HEK293 (cell line): ENCODE measurements at regions of chr5 and their contacts with region 1.

Region 1: DNA sequence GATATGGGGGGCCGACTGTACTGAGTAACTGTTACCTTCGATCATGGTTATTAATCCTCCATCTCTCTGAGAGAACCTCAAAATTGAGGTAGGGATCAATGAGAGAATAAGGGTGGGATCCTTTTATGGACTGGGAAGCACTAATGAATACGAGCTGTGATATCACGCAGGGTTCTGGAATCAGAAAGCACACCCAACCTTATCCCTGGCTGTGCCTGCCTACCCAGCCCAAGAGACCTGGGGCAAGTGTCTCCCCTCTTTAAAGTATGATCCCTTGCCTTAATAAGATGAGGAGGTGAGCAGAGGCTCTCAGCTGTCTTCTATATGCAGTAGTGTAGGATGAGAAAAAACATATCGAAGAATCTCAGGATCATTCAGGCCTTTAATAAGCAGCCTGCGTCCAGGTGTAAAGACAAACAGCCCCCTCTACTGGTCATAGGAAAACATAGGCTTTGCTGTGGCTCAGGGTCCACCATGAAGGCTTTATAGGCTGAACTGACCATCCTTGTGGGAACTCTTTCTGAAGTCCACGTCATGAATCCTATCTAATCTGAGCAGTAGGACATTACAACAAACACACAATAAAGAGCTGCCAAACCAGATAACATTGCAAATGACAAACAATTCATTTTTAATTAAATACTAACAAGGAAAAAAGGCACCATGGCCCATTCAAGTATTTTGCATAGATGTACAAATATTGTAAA is 16.8 kb downstream of the NIPAL4 start:
- H3K4me3 ChIP-seq: no peak overlapping the region
- H3K27ac ChIP-seq: no peak overlapping the region
- H3K4me1 ChIP-seq: no peaks in the 10 kb centered on the region
- CTCF ChIP-seq: peak; percentile 70; the same call in 1 of the 2 replicates

Region 2: GRCh38 chr5:157328277-157328912 is 148.5 kb before region 1 on chr5:
- CTCF ChIA-PET with region 1: interaction called, 16 read pairs
- POLR2A ChIA-PET with region 1: no interaction called
- H3K4me3 ChIP-seq: no peak overlapping the region
- H3K27ac ChIP-seq: no peak overlapping the region
- H3K4me1 ChIP-seq: no peaks in the 10 kb centered on the region
- CTCF ChIP-seq: peak; percentile 79

Region 3: DNA sequence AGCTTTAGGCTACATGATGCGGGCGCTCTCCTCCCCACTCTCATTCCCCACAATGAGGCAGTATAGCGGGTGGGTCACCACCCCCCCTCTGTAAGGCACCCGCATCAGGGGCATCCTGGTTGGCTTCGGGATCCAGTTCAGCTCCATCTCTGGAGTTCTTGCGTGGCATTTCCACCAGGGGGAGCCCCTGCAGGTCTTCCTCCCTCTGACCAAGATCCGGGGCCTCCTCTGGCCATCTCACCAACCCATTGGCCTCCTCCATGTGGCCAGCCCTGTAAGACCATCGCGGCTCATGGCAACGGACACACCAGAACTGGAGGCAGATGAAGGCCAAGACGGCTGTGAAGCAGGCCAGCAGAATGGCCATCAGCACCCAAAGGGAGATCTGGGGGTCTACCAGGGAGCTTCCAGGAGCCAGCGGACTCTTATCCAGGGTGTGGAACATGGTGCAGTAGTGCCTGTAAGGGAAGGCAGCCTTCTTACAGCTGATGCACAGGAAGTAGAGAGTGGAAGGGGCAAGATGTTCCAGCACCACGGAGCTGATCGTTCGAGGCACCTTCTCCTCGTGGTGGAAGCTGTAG is 133.9 kb before region 1 on chr5:
- CTCF ChIA-PET with region 1: interaction called, 14 read pairs
- POLR2A ChIA-PET with region 1: no interaction called
- H3K4me3 ChIP-seq: no peak overlapping the region
- H3K27ac ChIP-seq: no peak overlapping the region
- H3K4me1 ChIP-seq: no peaks in the 10 kb centered on the region
- CTCF ChIP-seq: peak; percentile 39; the same call in 1 of the 2 replicates

Region 4: DNA sequence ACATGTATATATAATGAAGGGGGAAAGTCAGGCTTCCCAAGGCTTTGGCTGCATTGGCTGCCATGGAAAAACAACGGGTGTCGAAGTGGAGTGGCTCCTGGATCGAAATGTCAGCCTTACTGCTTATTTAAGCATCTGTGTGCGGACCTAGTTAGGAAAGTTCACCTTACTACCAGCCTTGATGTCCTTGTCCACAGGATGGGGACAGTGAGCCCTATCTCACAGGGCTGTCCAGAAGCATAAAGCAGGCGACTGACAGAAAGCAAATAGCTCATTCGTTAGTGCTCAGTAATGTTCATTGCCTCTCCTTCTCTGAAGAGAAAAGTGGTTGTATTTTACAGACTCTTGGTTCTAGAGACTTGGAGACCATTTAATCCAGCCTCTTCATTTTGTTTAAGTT is 98.4 kb before region 1 on chr5:
- CTCF ChIA-PET with region 1: interaction called, 10 read pairs
- POLR2A ChIA-PET with region 1: no interaction called
- H3K4me3 ChIP-seq: no peak overlapping the region
- H3K27ac ChIP-seq: no peak overlapping the region
- H3K4me1 ChIP-seq: no peaks in the 10 kb centered on the region
- CTCF ChIP-seq: no peak

Region 5: DNA sequence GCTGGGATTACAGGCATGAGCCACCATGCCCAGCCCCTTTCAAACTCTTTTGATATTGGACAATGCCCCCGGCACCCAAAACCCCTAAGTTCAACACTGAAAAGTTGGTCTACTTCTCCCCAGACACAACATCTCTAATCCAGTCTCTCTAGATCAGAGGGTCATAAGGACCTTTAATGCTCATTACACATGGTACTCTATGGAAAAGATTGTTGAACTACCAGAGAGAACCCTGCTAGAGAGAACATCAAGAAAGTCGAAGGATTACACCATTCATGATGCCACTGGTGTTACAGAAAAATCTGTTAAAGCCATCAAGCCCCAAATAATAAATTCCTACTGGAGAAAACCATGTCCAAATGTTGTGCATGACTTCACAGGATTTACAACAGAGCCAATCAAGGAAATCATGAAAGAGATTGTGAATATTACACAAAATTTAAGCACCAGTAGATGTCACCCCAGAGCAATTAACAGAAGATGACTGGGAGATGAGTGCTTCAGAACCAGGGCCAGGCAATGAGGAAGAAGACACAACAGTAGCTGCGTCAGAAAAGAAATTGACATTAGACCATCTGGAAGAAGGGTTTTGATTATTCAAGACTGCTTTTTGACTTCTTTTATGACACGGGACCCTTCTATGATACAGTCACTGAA is 45.2 kb before region 1 on chr5:
- CTCF ChIA-PET with region 1: interaction called, 51 read pairs
- POLR2A ChIA-PET with region 1: no interaction called
- H3K4me3 ChIP-seq: no peak overlapping the region
- H3K27ac ChIP-seq: no peak overlapping the region
- H3K4me1 ChIP-seq: no peaks in the 10 kb centered on the region
- CTCF ChIP-seq: no peak

Region 6: GRCh38 chr5:157718519-157718918 is 241.7 kb after region 1 on chr5:
- CTCF ChIA-PET with region 1: interaction called, 15 read pairs
- POLR2A ChIA-PET with region 1: no interaction called
- H3K4me3 ChIP-seq: no peak overlapping the region
- H3K27ac ChIP-seq: no peak overlapping the region
- H3K4me1 ChIP-seq: no peaks in the 10 kb centered on the region
- CTCF ChIP-seq: 0 out of 2 replicates have a peak, but pooled peaks have one; percentile 17